ENCODE measurements at regions of chr5 and their contacts with region 1.

Region 1: DNA sequence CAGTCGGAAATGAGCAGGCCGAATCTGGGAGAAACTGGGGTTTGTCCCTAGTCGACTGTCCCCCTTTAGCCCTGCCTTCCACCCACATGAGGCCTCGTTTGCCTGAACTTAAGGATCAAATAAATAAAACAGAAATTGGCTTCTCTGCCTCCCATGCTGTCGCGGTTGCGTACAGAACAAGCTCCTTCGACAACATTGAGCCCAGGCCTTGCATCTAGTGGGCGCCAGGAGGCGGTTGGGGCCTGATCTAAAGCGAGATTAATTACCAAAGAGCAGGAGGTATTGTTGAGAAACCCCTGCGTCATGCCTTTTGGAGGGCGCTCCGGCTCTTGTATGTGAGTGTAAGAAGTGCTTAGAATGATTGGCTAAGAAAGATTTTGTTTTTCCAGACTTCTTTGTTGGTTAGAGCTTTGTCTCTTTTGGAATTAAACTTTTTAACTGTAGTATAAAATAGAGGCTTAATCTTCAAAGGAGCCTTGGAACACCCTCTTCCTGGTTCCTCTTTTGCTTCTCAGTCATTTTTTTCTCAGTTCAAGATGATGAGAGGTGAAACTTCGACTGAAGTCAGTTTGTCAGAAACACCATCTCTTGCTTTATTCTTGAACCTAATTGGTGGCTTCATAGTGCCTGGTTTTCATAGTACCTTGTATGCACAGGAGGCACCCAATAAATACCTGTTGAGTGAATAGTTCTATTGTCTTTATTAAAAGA is 827 bp downstream of the ATP6V0E1 start:
- DNase-seq: peak; percentile 56
- ATAC-seq: peak; percentile 88
- H3K4me3 ChIP-seq: peak overlapping the region; percentile 99
- H3K27ac ChIP-seq: peak overlapping the region; percentile 98
- H3K4me1 ChIP-seq: peaks cover 3% of the 10 kb centered on the region; the same call in 1 of the 2 replicates
- H3K27me3 ChIP-seq: no peaks in the 10 kb centered on the region
- CTCF ChIP-seq: peak; percentile 57 to 80 (median 74)
- EP300 ChIP-seq: no peak
- POLR2A ChIP-seq: no peak
- RAD21 ChIP-seq: peak; percentile 82

Region 2: GRCh38 chr5:172920447-172920849 is 64.0 kb before region 1 on chr5:
- CTCF ChIA-PET with region 1: no interaction called
- POLR2A ChIA-PET with region 1: no interaction called
- RAD21 ChIA-PET with region 1: no interaction called
- SMC1A ChIA-PET with region 1: no interaction called
- in situ Hi-C with region 1: no loop called
- intact Hi-C with region 1: no loop called
- DNase-seq: no peak
- ATAC-seq: no peak
- H3K4me3 ChIP-seq: no peak overlapping the region
- H3K27ac ChIP-seq: no peak overlapping the region
- H3K4me1 ChIP-seq: no peaks in the 10 kb centered on the region
- H3K27me3 ChIP-seq: no peaks in the 10 kb centered on the region
- CTCF ChIP-seq: no peak
- EP300 ChIP-seq: no peak
- POLR2A ChIP-seq: no peak
- RAD21 ChIP-seq: no peak

Region 3: GRCh38 chr5:172994405-172994804 is 10.0 kb after region 1 on chr5:
- CTCF ChIA-PET with region 1: interaction called, 16 read pairs
- POLR2A ChIA-PET with region 1: interaction called, 9 read pairs
- RAD21 ChIA-PET with region 1: interaction called, 8 read pairs
- SMC1A ChIA-PET with region 1: interaction called, 8 read pairs
- in situ Hi-C with region 1: no loop called
- intact Hi-C with region 1: no loop called
- DNase-seq: no peak
- ATAC-seq: no peak; the same call in 2 of the 3 replicates
- H3K4me3 ChIP-seq: no peak overlapping the region
- H3K27ac ChIP-seq: no peak overlapping the region
- H3K4me1 ChIP-seq: peaks cover 3% of the 10 kb centered on the region; the same call in 1 of the 2 replicates
- H3K27me3 ChIP-seq: no peaks in the 10 kb centered on the region
- CTCF ChIP-seq: no peak
- EP300 ChIP-seq: no peak
- POLR2A ChIP-seq: no peak
- RAD21 ChIP-seq: no peak

Region 4: DNA sequence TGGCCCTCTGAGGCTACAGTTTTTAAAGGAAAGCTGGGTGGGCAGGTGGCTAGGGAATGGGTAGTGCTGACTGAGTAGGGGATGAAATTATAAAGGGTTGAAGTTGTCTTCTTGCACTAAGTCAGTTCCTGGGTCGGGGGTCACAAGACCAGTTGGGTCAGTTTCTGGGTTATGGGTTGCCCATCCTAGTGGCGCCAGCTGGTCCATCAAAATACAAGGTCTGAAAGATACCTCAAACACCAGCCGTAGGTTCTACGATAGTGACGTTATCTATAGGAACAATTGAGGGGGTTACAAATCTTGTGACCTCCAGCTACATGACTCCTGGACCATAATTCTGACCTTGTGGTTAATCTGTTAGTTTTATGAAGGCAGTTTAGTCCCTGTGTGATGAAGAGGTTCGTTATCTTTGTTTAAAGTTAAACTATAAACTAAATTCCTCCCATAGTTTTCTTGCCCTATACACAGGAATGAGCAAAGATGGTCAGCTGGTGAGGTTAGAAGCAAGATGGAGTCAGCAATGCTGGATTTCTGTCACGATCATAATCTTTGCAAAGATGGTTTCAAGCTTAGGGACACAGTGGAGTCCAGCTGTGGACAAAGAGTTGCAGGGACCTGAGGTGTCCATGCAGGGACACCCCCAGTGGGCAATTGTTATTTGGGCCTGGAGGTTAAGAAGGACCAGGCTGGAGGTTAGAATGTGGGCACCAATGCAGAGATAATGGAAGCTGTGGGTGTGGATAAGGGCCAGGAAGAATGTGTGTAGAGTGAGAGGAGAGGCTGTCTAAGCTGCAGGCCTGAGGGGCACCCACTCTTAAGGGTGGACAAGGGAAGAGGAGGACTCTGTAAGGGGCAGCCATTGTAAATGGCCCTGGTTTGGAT is 57.7 kb after region 1 on chr5:
- CTCF ChIA-PET with region 1: interaction called, 4 read pairs
- POLR2A ChIA-PET with region 1: interaction called, 6 read pairs
- RAD21 ChIA-PET with region 1: interaction called, 46 read pairs
- SMC1A ChIA-PET with region 1: interaction called, 10 read pairs
- in situ Hi-C with region 1: no loop called
- intact Hi-C with region 1: no loop called
- DNase-seq: no peak
- ATAC-seq: no peak
- H3K4me3 ChIP-seq: no peak overlapping the region
- H3K27ac ChIP-seq: no peak overlapping the region
- H3K4me1 ChIP-seq: peaks cover 3% of the 10 kb centered on the region
- H3K27me3 ChIP-seq: no peaks in the 10 kb centered on the region
- CTCF ChIP-seq: no peak
- EP300 ChIP-seq: no peak
- POLR2A ChIP-seq: no peak
- RAD21 ChIP-seq: no peak

Region 5: DNA sequence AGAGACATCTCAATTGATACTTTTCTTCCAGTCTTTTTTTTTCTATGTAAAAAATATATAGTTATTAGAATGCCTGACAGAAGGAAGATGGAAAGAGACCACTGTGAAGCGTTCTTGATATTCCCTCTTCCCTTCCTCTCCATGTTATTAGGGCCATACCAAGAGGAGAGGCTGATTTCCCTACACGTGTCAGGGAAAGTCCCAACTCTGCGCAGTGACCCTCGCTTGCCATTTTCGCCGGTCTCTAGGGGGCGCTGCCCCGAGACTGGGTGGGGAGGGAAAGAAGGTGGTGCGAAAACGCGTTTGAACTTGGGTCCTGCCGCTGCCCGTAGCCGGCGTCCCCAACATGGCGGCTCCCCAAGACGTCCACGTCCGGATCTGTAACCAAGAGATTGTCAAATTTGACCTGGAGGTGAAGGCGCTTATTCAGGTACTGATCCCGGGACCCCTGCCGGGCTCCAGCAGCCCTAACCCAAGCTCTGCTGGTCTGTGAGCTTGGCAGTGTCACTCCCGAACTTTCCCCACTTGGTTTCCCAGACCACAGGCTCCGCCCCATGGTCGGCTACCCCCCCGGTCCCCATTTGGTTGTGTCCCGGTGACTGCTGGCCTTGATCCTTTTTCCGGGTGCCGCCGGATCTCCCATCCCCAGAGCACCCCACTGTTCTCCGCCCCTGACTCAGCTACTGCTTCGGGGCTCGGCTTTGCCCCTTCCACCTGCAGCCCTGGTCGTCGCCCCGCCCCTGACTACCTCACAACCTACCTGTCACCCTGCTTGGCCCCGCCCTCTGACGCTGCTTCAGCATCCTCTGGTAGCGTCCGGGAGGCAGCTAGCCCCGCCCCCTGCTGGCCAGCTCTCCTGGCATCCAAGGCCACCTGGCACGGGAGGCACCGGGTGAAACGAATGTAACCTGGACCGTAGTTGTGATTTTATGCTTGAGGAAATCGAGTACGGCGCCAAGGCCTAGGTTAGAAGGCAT is 160.1 kb after region 1 on chr5 and contains the start of gene BNIP1:
- CTCF ChIA-PET with region 1: interaction called, 25 read pairs
- POLR2A ChIA-PET with region 1: interaction called, 15 read pairs
- RAD21 ChIA-PET with region 1: interaction called, 33 read pairs
- SMC1A ChIA-PET with region 1: interaction called, 14 read pairs
- in situ Hi-C with region 1: loop called (anchors 5 kb)
- intact Hi-C with region 1: loop called (anchors 1 kb)
- DNase-seq: peak; percentile 84
- ATAC-seq: peak; percentile 96
- H3K4me3 ChIP-seq: peak within 1 kb of the TSS; percentile 94
- H3K27ac ChIP-seq: peak within 1 kb of the TSS; percentile 91
- H3K4me1 ChIP-seq: no peaks in the 10 kb centered on the region; the same call in 1 of the 2 replicates
- H3K27me3 ChIP-seq: no peaks in the 10 kb centered on the region
- CTCF ChIP-seq: peak; percentile 96 to 98 (median 98)
- EP300 ChIP-seq: no peak
- POLR2A ChIP-seq: peak; percentile 79
- RAD21 ChIP-seq: peak; percentile 60
- polyA plus RNA-seq, gene BNIP1: 56.3 to 62.5 TPM

Region 6: GRCh38 chr5:173287086-173287485 is 302.7 kb after region 1 on chr5:
- CTCF ChIA-PET with region 1: interaction called, 4 read pairs
- POLR2A ChIA-PET with region 1: no interaction called
- RAD21 ChIA-PET with region 1: interaction called, 4 read pairs
- SMC1A ChIA-PET with region 1: interaction called, 3 read pairs
- in situ Hi-C with region 1: loop called (anchors 5 kb)
- intact Hi-C with region 1: loop called (anchors 2 kb)
- DNase-seq: no peak
- ATAC-seq: peak; percentile 28; the same call in 2 of the 3 replicates
- H3K4me3 ChIP-seq: no peak overlapping the region
- H3K27ac ChIP-seq: no peak overlapping the region
- H3K4me1 ChIP-seq: peaks cover 14% of the 10 kb centered on the region
- H3K27me3 ChIP-seq: no peaks in the 10 kb centered on the region
- CTCF ChIP-seq: no peak
- EP300 ChIP-seq: no peak
- POLR2A ChIP-seq: no peak
- RAD21 ChIP-seq: no peak

Region 7: GRCh38 chr5:173581408-173582215 is 597.2 kb after region 1 on chr5:
- CTCF ChIA-PET with region 1: no interaction called
- POLR2A ChIA-PET with region 1: no interaction called
- RAD21 ChIA-PET with region 1: no interaction called
- SMC1A ChIA-PET with region 1: no interaction called
- in situ Hi-C with region 1: loop called (anchors 10 kb)
- intact Hi-C with region 1: no loop called
- DNase-seq: no peak
- ATAC-seq: peak; percentile 90
- H3K4me3 ChIP-seq: no peak overlapping the region
- H3K27ac ChIP-seq: no peak overlapping the region
- H3K4me1 ChIP-seq: no peaks in the 10 kb centered on the region
- H3K27me3 ChIP-seq: no peaks in the 10 kb centered on the region; a peak in 1 of 4 replicates
- CTCF ChIP-seq: peak; percentile 63 to 90 (median 82)
- EP300 ChIP-seq: no peak
- POLR2A ChIP-seq: no peak
- RAD21 ChIP-seq: peak; percentile 49

Measured in GM12878 (cell line).